HepG2 (cell line): ENCODE measurements at regions of chr18 and their contacts with region 1.

Region 1: DNA sequence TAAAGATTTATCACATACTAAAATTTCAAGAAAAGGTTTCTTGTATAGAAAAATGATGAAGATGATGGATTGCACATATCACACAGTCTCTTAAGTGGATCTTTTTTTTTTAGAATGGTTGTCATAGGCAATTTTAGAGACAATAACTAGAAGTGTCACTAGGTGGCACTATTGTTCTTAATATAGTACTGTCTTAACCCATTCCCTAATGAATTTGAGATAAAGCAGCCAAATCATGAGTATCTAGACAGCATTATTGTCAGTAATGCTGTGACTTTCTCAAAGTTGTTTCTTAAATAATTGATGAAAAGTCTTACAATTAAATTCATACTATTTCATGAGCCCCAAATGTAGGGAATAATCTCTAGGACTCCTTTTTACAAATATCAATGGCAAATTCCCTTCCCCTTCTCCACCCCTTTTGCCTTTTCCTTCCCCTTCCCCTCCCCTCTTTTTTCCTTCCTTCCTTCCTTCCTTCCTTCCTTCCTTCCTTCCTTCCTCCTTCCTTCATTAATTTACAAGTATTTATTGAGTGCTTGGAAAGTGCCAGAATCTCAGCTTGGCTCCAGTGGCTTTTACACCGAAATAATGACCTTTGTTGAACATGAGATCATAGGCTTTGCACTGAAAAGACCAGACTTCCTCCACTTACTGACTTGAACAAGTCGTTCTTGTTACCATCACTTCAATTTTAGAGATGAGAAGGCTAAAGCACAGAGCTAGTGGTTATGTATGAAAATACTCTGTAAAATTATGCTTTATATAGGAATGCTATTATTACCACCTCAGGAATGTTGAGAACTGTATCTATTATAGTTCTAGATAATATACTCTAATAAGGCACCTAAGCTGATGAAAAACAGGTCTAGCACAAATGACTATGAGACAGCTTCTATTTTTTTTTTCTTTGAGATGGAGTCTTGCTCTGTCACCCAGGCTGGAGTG is 19.8 kb downstream of the MYL12B start:
- DNase-seq: peak; percentile 67
- ATAC-seq: peak; percentile 64
- H3K4me3 ChIP-seq: no peak overlapping the region
- H3K27ac ChIP-seq: no peak overlapping the region
- H3K4me1 ChIP-seq: peaks cover 32% of the 10 kb centered on the region
- H3K27me3 ChIP-seq: peaks cover 0 to 17% of the 10 kb centered on the region in 2 experiments; a peak in 3 of 5 replicates
- CTCF ChIP-seq: peak; percentile 71
- EP300 ChIP-seq: no peak
- POLR2A ChIP-seq: no peak
- RAD21 ChIP-seq: peak; percentile 63

Region 2: GRCh38 chr18:3447895-3448837 is 166.4 kb after region 1 on chr18:
- CTCF ChIA-PET with region 1: no interaction called
- POLR2A ChIA-PET with region 1: no interaction called
- in situ Hi-C with region 1: loop called (anchors 10 kb)
- intact Hi-C with region 1: no loop called
- DNase-seq: peak; percentile 93
- ATAC-seq: peak; percentile 85
- H3K4me3 ChIP-seq: peak overlapping the region; percentile 68 to 93 (median 93)
- H3K27ac ChIP-seq: peak overlapping the region; percentile 88
- H3K4me1 ChIP-seq: peaks cover 19% of the 10 kb centered on the region
- H3K27me3 ChIP-seq: no peaks in the 10 kb centered on the region; a peak in 1 of 5 replicates
- CTCF ChIP-seq: peak; percentile 36
- EP300 ChIP-seq: peak in 1 of 2 experiments; percentile 44; a peak in 2 of 4 replicates
- POLR2A ChIP-seq: peak; percentile 84 to 90
- RAD21 ChIP-seq: peak; percentile 14; the same call in 1 of the 2 replicates

Region 3: DNA sequence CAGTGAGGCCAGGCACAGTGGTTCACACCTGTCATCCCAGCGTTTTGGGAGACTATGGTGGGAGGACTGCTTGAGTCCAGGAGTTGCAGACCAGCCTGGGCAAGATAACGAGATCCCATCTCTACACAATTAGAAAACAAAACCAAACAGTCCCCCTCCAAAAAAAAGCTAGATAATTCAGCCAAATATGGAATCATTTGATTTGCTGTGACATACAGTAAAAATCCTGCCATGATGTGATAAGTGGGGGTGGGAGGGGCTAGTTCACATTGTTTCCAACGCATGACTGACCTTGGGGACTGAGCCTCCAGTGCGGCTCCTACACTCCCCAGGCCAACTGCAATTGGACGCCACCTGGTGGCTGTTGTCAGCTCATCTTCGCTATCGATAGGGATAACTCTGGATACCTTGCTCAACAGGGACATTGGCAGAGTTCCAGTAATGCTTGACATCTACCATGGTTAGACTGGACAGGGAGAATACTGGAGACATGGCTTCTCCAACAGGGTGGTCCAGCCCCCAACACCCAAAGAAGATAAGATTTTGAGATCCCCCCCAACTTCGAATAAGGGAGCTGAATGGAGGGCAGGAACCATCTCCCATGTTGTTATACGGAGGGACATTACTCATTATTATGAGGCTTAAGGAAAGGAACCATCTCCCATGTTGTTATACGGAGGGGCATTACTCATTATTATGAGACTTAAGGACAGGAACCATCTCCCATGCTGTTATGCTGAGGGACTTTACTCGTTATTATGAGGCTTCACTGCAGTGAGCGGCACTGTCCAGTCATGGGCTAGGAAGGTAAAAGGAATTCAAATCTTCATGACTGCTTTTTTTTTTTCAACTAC is 304.2 kb after region 1 on chr18:
- CTCF ChIA-PET with region 1: interaction called, 21 read pairs
- POLR2A ChIA-PET with region 1: no interaction called
- in situ Hi-C with region 1: loop called (anchors 5 kb)
- intact Hi-C with region 1: loop called (anchors 2 kb)
- DNase-seq: peak; percentile 92
- ATAC-seq: peak; percentile 97
- H3K4me3 ChIP-seq: no peak overlapping the region
- H3K27ac ChIP-seq: no peak overlapping the region
- H3K4me1 ChIP-seq: peaks cover 47% of the 10 kb centered on the region
- H3K27me3 ChIP-seq: peaks cover 0 to 19% of the 10 kb centered on the region in 2 experiments; a peak in 3 of 5 replicates
- CTCF ChIP-seq: peak; percentile 94
- EP300 ChIP-seq: no peak
- POLR2A ChIP-seq: no peak
- RAD21 ChIP-seq: peak; percentile 83

Region 4: GRCh38 chr18:3869848-3870247 is 588.1 kb after region 1 on chr18:
- CTCF ChIA-PET with region 1: interaction called, 9 read pairs
- POLR2A ChIA-PET with region 1: no interaction called
- in situ Hi-C with region 1: loop called (anchors 5 kb)
- intact Hi-C with region 1: no loop called
- DNase-seq: peak; percentile 36
- ATAC-seq: peak; percentile 70
- H3K4me3 ChIP-seq: no peak overlapping the region
- H3K27ac ChIP-seq: no peak overlapping the region
- H3K4me1 ChIP-seq: no peaks in the 10 kb centered on the region
- H3K27me3 ChIP-seq: 0 out of 5 replicates have a peak, but pooled peaks cover 0 to 7% of the 10 kb centered on the region in 2 experiments
- CTCF ChIP-seq: peak; percentile 55
- EP300 ChIP-seq: no peak
- POLR2A ChIP-seq: no peak
- RAD21 ChIP-seq: 0 out of 2 replicates have a peak, but pooled peaks have one; percentile 22

Region 5: DNA sequence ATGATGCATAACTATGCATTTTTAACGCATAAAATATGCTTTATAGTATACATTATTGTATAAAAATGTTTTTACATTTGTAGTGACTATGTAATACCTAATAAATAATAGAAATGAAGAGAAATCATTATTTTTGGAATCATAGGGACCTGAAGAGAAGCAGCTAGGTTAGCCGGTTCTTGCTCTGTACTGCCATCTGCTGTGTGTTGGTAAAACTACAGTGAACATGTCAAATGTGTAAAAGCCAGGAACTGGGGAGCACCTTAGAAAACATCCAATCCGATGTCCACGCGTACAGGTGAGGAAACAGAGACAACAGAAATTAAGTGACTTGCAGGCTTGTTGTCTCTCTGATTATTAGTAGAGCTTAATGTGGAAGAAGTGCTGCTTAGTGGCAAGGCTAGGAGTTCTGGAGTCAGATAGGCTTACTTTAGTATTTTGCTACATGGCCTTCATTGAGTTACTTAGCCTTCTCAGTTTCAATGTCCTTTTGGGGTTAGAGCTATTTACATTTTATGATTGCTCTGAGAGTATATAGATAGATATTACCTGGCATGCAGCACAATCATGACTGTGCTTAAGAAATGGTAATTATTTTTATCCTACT is 786.9 kb after region 1 on chr18:
- CTCF ChIA-PET with region 1: interaction called, 6 read pairs
- POLR2A ChIA-PET with region 1: no interaction called
- in situ Hi-C with region 1: no loop called
- intact Hi-C with region 1: loop called (anchors 2 kb)
- DNase-seq: peak; percentile 34
- ATAC-seq: peak; percentile 59; the same call in 2 of the 3 replicates
- H3K4me3 ChIP-seq: no peak overlapping the region
- H3K27ac ChIP-seq: no peak overlapping the region
- H3K4me1 ChIP-seq: no peaks in the 10 kb centered on the region
- H3K27me3 ChIP-seq: no peaks in the 10 kb centered on the region
- CTCF ChIP-seq: peak; percentile 61
- EP300 ChIP-seq: no peak
- POLR2A ChIP-seq: no peak
- RAD21 ChIP-seq: no peak